ENCODE measurements at regions of chr17 and their contacts with region 1.

Region 1: DNA sequence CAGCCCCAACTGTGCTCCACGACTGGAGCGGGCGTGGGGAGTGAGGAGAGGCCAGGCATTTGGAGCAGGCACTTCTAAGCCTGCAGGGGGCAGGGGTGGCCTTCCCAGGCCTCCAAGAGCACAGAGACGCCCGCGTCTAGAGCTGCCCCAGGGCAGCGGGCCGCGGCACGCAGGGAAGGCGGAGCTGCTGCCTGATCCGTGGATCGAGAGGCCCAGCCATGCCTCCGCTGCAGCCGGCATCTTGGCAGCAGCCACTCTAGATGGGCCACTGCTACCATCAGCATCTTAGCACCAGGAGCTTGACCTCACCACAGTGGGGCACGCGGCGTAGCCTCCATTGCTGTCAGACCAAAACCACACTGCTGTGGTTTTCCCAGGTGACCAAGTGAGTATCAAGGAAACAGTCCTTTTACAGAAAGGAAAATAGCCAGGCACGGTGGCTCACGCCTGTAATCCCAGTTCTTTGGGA is 20.4 kb upstream of the WDR45B start:
- DNase-seq: peak in 1 of 2 donors; percentile 73
- H3K4me3 ChIP-seq: peak overlapping the region in 1 of 2 donors; percentile 11
- H3K27ac ChIP-seq: no peak overlapping the region
- H3K4me1 ChIP-seq: peaks cover 0 to 3% of the 10 kb centered on the region in 2 donors
- H3K27me3 ChIP-seq: no peaks in the 10 kb centered on the region
- CTCF ChIP-seq: peak; percentile 28 to 61 (median 44)

Region 2: DNA sequence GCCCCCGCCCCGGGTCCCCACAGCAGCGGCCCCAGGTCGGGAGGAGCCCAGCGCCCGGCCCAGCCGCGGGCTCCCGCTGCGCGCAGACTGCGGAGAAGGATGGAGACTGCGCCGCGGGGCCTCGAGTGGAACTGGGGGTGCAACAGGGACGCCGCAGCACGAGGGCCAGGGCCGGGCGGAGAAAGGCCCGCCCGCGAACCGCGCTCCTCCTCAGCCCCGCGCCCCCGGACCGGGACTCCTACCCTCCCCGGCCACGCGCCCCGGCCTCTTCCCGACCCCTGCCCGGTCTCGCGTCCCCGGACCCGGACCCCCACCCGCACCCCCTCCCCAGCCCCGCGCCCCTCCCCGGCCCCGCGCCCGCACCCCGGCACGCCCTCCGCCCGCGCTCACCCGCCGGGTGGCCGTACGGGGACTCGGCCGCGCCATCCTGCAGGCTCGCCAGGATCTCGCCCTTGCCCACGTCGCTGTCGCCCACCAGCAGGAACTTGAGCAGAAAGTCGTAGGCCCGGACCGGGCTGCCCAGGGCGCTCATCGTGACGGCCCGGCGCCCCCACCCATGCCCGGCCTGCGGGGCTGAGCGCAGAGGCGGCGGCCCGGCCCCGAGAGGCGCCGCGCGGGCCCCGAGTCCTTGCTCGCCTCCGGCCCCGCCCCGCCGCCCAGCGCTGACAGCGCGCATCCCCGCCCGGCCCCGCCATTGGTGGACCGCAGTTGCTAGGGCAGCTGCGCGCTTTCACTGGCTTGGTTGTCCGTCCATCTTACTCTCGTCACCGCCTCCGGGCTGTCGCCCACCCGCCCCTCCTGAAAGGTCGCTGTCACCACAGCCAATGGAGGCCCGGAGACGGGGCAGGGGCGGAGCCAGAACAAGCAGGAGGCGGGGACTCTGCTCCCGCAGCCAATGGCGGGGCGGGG is 29.7 kb after region 1 on chr17 and contains the start of gene RAB40B:
- intact Hi-C with region 1: loop called (anchors 2 kb)
- DNase-seq: peak; percentile 98 to 100
- H3K4me3 ChIP-seq: peak within 1 kb of the TSS; percentile 71 to 99
- H3K27ac ChIP-seq: peak within 1 kb of the TSS in 1 of 2 donors; percentile 65
- H3K4me1 ChIP-seq: peaks cover 10 to 11% of the 10 kb centered on the region in 2 donors
- H3K27me3 ChIP-seq: no peaks in the 10 kb centered on the region
- CTCF ChIP-seq: no peak
- total RNA-seq, gene RAB40B: 9.4 TPM

Region 3: GRCh38 chr17:82775001-82775823 is 106.5 kb after region 1 on chr17:
- intact Hi-C with region 1: loop called (anchors 2 kb)
- DNase-seq: peak in 1 of 2 donors; percentile 75
- H3K4me3 ChIP-seq: no peak overlapping the region
- H3K27ac ChIP-seq: no peak overlapping the region
- H3K4me1 ChIP-seq: no peaks in the 10 kb centered on the region
- H3K27me3 ChIP-seq: no peaks in the 10 kb centered on the region
- CTCF ChIP-seq: peak; percentile 70 to 87 (median 86)

Measured in ascending aorta (tissue), 2 donors.